Lower leg skin (tissue), 4 donors: ENCODE measurements at regions of chr9 and their contacts with region 1.

Region 1: GRCh38 chr9:70484210-70485130 is 70.0 kb upstream of the KLF9 start:
- DNase-seq: no peak
- H3K4me3 ChIP-seq: no peak overlapping the region
- CTCF ChIP-seq: peak in 1 of 3 donors; percentile 62
- POLR2A ChIP-seq: no peak

Region 2: DNA sequence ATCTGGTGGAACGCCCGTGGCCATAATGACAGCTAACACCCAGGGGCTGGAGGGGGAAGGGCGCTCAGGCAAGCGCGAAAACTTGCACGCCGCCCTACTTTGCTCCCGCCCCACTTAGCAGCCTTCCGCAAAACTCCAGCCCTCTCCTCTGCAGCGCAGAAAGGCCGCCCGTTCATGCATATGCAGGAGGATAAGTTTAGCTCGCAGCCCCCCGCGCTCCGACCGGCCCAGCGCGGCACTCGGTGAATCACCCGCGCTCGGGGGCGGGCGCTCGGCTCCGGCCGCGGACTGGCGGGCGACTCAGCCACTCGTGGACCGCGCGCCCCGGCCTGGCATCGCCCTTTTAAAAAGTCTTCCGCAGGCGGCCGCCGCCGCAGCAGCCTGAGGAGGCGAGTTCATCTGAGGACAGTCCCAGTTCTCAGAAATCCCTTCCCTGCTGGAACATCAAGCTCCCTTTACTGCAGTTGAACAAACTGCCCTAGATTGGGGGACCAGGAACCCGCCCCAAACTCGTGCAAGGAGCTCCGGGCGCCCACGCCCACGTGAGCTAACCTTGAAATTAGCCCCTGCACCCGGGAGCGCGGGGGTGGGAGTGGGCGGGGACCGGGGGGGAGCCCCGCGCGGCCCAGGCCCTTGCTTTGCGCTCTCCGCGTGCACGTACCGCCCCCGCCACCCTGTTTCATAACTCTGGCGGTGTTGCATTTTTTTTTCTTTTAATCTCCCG is 65.5 kb before region 1 on chr9:
- intact Hi-C with region 1: loop called (anchors 5 kb)
- DNase-seq: peak; percentile 97 to 99
- H3K4me3 ChIP-seq: no peak overlapping the region
- CTCF ChIP-seq: no peak
- POLR2A ChIP-seq: peak in 1 of 2 donors; percentile 63

Region 3: GRCh38 chr9:70470050-70471015 is 14.1 kb before region 1 on chr9:
- intact Hi-C with region 1: no loop called
- DNase-seq: peak; percentile 59 to 86
- H3K4me3 ChIP-seq: no peak overlapping the region
- CTCF ChIP-seq: no peak
- POLR2A ChIP-seq: no peak

Region 4: GRCh38 chr9:70609542-70610286 is 125.2 kb after region 1 on chr9:
- intact Hi-C with region 1: no loop called
- DNase-seq: peak; percentile 45 to 86
- H3K4me3 ChIP-seq: no peak overlapping the region
- CTCF ChIP-seq: no peak
- POLR2A ChIP-seq: no peak